ENCODE measurements at regions of chr7 and their contacts with region 1.

Region 1: DNA sequence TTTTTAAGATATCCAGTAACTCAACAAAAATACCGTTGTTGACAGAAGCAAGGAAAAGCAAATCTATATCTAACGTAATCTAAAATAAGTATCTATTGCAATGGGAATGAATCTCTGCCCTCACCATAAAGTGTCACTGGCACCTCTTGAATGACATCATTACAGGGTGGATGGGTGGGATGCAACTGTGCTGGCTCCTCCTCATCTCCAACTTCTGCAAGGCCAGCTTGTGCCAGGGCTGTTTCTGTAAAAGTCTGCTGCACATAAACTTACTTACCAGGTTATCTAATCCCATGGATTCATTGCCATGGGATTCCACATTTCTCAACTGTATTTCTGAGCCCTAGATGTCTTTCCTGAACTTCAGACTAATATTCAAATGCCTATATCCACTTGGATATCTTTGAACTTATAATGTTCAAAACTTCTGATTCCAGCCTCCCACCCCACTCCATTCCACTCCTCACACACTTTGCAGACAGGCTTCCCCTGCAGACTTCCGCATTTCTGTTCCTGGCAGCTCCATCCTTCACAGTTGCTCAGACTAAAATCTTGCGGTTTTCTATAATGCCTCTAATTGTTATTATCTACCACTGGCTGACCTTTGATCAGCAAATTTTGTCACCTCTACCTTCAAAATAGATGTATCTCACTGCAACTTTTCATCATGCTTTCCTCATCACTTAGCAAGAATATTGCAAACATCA is 10.7 kb downstream of the FGL2 start:
- DNase-seq: no peak
- ATAC-seq: no peak
- H3K4me3 Mint-ChIP-seq: no peak overlapping the region
- H3K27ac Mint-ChIP-seq: no peak overlapping the region
- H3K4me1 Mint-ChIP-seq: peaks cover 31% of the 10 kb centered on the region
- H3K27me3 Mint-ChIP-seq: no peaks in the 10 kb centered on the region
- CTCF ChIP-seq: no peak

Region 2: DNA sequence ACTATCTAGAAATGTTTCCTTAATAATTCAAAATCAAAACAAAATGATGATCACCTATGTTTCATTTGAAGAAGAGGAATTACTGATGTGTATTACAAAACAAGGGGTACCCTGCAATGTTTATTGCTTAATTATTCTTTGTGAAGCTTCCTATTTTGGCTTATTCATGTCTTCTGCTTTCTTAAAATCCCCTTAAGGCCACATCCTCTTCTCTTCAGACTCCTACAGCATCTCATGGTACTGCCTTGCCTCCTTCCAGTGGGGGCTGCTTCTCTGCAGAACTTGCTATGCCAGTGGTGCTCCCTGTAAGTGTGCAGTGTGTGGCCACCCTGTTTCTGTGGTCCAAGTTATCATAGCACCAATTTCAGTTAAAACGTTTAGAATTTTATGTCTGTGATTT is 31.4 kb before region 1 on chr7:
- CTCF ChIA-PET with region 1: no interaction called
- POLR2A ChIA-PET with region 1: no interaction called
- intact Hi-C with region 1: no loop called
- DNase-seq: no peak
- ATAC-seq: peak; percentile 70
- H3K4me3 Mint-ChIP-seq: no peak overlapping the region
- H3K27ac Mint-ChIP-seq: peak overlapping the region; percentile 74
- H3K4me1 Mint-ChIP-seq: peaks cover 7% of the 10 kb centered on the region
- H3K27me3 Mint-ChIP-seq: no peaks in the 10 kb centered on the region
- CTCF ChIP-seq: no peak

Region 3: GRCh38 chr7:77247206-77247850 is 58.4 kb after region 1 on chr7:
- CTCF ChIA-PET with region 1: interaction called, 8 read pairs
- POLR2A ChIA-PET with region 1: interaction called, 3 read pairs
- intact Hi-C with region 1: loop called (anchors 1 kb)
- DNase-seq: peak; percentile 70
- ATAC-seq: peak; percentile 99
- H3K4me3 Mint-ChIP-seq: no peak overlapping the region
- H3K27ac Mint-ChIP-seq: no peak overlapping the region
- H3K4me1 Mint-ChIP-seq: no peaks in the 10 kb centered on the region
- H3K27me3 Mint-ChIP-seq: no peaks in the 10 kb centered on the region
- CTCF ChIP-seq: peak; percentile 91

Region 4: DNA sequence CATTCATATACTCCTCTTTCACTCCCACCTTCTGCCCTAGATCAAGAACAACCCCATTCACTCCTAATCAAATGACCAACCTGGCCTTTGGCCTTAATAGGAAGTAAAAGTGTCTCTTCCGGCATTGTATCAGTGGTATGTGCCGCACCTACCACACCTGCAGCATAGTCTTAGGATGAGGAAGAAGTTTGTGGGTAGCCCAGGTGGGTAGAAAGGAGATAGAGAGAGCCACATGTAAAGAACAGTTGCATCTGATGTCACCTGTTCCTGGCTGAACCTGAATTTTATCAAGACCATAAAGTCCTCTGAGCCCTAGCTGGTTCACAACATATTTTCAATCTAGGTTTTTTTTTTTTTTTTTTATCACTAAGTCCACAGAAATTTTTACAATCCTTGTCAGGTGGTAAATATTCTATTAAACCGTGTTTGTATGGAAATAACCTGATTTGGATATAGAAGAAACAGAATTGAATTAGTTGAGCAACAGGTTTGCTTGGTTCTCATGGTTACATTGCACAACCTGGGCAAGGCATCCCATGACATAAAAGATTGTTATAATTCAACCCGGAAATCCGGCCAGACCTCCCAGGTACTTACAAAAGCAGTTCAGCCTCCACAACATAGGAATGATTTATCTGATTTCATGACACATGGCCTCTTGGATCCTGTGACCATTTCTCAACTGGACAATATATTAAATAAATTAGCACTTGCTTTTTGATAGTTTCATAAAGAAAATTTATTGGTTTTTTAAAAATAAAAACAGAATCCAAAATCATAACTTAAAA is 292.9 kb after region 1 on chr7:
- CTCF ChIA-PET with region 1: no interaction called
- POLR2A ChIA-PET with region 1: no interaction called
- intact Hi-C with region 1: no loop called
- DNase-seq: no peak
- ATAC-seq: no peak
- H3K4me3 Mint-ChIP-seq: no peak overlapping the region
- H3K27ac Mint-ChIP-seq: no peak overlapping the region
- H3K4me1 Mint-ChIP-seq: peaks cover 4% of the 10 kb centered on the region
- H3K27me3 Mint-ChIP-seq: peaks cover 2% of the 10 kb centered on the region
- CTCF ChIP-seq: no peak

Measured in activated B cell treated with CpG ODN at 0.5 μM for 24 hours (primary cell).